PC-9 (cell line): ENCODE measurements at regions of chr9 and their contacts with region 1.

Region 1: DNA sequence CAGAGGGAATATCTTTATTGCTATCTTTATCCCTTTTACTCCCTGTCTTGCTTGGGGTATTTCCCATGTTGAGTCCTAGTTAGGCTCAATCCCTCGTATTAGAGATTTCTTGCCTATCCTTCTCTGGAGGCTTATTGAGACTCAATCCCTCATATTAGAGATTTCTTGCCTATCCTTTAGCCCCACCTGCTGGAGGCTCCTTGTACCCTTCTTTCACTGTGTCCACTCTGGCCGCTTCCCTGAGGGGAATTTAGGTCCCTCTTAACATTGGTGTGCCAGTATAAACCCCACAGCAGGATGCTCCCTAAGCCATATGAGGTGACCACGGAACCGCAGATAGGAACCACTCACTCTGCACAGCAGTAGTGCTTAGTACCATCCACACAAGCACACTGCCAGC is 110.7 kb upstream of the MAMDC2 start:
- DNase-seq: peak in 1 of 2 experiments; percentile 17
- H3K4me3 ChIP-seq: no peak overlapping the region
- H3K27ac ChIP-seq: no peak overlapping the region
- H3K4me1 ChIP-seq: no peaks in the 10 kb centered on the region
- H3K27me3 ChIP-seq: no peaks in the 10 kb centered on the region
- CTCF ChIP-seq: peak; percentile 59

Region 2: DNA sequence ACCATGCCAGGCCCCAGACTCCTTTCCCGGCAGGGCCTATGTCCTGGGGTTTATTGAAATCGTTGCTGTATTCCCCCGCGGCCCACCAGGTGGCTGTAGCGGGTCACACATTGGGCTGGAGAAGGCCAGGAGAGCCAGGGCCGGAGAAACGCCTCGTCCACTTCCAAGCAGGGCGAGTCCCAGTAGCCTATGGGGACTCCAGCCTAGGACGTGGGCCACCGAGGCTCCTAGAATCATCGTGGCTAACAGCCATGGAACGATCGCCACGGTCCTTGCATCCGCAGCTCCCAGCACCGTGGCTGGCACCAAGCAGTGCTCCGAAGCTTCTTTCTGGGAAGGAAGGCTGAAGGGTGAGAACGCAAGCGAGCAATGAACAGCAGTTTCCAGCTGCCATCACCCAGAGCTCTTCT is 520.2 kb before region 1 on chr9:
- CTCF ChIA-PET with region 1: no interaction called
- POLR2A ChIA-PET with region 1: no interaction called
- intact Hi-C with region 1: loop called (anchors 2 kb)
- DNase-seq: peak in 1 of 2 experiments; percentile 66
- H3K4me3 ChIP-seq: no peak overlapping the region
- H3K27ac ChIP-seq: no peak overlapping the region
- H3K4me1 ChIP-seq: no peaks in the 10 kb centered on the region
- H3K27me3 ChIP-seq: no peaks in the 10 kb centered on the region
- CTCF ChIP-seq: peak; percentile 65

Region 3: DNA sequence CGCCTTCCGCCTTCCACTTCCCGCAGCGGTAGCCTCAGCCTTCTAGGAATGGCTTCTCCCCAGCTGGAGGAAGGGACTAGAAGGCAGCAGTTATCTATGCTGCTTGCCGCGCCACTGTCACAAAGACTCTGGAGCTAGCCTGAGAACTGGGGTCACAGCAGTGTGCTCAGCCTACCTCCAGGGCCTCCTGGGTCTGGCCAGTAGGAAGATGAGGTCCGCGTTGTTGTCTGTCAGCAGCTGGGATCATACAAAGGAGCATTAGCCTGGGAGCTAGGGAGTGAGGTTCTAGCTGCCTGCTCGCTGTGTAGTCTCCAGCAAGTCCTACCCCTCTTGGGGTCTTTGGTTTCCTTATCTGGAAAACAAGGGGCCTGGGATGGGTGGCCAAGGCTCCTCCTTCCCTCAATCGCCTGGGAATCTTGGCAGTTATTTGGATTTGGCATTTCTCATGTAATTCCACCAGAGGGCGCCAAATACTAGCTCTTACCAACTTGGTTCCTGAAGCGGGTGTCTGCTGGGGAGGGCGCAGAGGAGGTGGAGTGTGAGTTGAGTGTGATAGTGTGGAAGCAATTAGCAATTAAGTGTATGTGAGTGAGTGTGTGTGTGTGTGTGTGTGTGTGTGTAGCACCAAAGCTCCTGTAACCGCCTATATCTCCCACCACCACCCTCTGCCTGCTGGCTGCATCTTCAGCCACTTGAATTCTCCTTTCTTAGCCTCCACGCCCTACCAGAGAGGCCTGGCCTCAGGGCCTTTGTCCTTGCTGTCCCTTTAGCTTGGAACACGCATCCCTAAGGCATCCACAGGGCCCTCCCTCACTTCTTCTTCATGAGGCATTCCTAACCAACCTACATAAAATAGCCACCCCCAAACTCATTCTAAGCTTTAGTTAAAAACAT is 510.7 kb before region 1 on chr9:
- CTCF ChIA-PET with region 1: interaction called, 6 read pairs
- POLR2A ChIA-PET with region 1: no interaction called
- intact Hi-C with region 1: loop called (anchors 2 kb)
- DNase-seq: peak in 1 of 2 experiments; percentile 49
- H3K4me3 ChIP-seq: no peak overlapping the region
- H3K27ac ChIP-seq: no peak overlapping the region
- H3K4me1 ChIP-seq: no peaks in the 10 kb centered on the region
- H3K27me3 ChIP-seq: no peaks in the 10 kb centered on the region
- CTCF ChIP-seq: peak; percentile 93

Region 4: DNA sequence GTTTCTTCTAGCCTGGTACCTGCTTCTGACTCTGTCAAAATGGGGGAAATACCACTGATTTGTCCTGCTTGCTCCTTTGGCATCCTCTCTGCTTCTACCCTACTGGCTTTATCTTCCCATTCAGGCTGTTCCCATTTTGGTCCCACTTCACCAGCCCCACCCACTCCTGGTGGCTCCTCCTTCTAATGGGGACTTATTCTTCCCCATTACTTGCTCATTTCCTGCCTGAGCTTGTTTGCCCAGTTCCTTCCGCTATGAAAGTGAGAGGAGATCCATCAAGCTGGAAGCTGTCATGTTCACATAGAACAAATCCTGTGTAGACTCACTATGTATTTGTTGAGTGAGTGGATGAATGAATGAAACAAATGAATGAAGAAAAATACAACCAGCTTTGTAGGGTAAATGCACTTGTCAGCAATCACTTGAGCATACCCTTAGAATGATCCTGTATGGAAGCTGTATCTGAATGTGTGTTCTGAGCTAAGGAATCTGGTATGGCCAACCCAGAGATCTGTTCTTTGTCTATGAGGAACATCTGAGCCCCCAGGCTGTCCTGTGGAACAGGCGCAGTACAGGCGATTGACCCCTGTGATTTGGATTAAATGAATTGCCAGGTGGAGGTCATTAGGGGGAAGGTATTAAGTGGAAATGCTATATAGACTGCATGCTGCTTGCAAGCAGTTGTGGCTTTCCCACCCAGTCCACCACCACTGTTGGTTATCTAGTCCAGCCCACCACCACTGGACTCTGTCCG is 350.2 kb before region 1 on chr9:
- CTCF ChIA-PET with region 1: no interaction called
- POLR2A ChIA-PET with region 1: no interaction called
- intact Hi-C with region 1: no loop called
- DNase-seq: peak; percentile 2 to 46
- H3K4me3 ChIP-seq: no peak overlapping the region
- H3K27ac ChIP-seq: no peak overlapping the region
- H3K4me1 ChIP-seq: no peaks in the 10 kb centered on the region
- H3K27me3 ChIP-seq: no peaks in the 10 kb centered on the region
- CTCF ChIP-seq: no peak

Region 5: DNA sequence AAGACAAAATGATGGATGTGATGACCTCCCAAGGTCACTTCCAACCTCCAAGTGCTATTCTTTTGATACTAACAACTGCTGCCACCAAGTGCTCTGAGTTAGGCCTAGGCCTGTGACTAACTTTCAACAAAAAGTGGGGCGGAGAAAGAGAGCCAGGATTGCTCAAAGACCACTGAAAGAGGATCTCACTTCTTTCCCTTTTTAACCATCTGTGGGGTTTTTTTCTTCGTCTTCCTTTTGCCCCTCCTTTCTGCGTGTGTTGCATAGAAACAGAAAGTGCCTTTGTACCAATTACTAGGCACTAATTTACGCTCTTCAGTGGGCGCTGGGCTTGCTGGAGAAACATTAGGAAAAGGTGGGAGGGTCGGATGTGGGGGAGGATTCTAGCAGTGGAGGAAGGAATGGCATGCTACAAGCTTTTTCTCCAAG is 473.5 kb after region 1 on chr9:
- CTCF ChIA-PET with region 1: no interaction called
- POLR2A ChIA-PET with region 1: no interaction called
- intact Hi-C with region 1: no loop called
- DNase-seq: no peak
- H3K4me3 ChIP-seq: no peak overlapping the region
- H3K27ac ChIP-seq: no peak overlapping the region
- H3K4me1 ChIP-seq: peaks cover 17% of the 10 kb centered on the region
- H3K27me3 ChIP-seq: no peaks in the 10 kb centered on the region
- CTCF ChIP-seq: no peak